ENCODE measurements at regions of chr5 and their contacts with region 1.

Region 1: DNA sequence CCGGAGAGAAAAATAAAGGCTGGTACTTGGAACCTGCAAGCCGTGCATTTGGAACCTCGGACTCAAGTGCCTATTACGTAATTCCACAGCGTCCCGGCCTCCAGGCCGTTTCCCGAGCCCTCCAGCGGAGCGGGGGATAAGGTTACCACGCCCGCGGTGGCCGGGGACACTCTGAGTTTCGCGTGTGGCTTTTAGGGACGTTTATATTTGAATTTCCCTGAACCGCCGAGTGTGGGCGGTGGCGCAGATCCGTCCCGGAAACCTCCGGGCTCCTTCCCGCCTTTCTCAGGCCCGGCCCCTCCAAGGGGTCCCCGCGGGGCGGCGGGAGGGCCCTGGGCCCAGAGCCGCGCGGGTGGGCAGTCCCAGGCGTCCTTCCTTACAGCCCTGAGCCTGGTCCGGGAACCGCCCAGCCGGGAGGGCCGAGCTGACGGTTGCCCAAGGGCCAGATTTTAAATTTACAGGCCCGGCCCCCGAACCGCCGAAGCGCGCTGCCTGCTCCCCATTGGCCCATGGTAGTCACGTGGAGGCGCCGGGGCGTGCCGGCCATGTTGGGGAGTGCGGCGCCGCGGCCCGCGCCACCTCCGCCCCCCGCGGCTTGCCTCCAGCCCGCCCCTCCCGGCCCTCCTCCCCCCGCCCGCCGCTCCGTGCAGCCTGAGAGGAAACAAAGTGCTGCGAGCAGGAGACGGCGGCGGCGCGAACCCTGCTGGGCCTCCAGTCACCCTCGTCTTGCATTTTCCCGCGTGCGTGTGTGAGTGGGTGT is at the start of gene LMNB1:
- DNase-seq: peak; percentile 96
- ATAC-seq: peak; percentile 70
- H3K4me3 ChIP-seq: peak within 1 kb of the TSS; percentile 81
- H3K27ac ChIP-seq: peak within 1 kb of the TSS; percentile 87
- H3K4me1 ChIP-seq: peaks cover 13% of the 10 kb centered on the region
- H3K27me3 ChIP-seq: no peaks in the 10 kb centered on the region
- CTCF ChIP-seq: no peak
- total RNA-seq, gene LMNB1: 119 and 151 TPM in 2 replicates

Region 2: DNA sequence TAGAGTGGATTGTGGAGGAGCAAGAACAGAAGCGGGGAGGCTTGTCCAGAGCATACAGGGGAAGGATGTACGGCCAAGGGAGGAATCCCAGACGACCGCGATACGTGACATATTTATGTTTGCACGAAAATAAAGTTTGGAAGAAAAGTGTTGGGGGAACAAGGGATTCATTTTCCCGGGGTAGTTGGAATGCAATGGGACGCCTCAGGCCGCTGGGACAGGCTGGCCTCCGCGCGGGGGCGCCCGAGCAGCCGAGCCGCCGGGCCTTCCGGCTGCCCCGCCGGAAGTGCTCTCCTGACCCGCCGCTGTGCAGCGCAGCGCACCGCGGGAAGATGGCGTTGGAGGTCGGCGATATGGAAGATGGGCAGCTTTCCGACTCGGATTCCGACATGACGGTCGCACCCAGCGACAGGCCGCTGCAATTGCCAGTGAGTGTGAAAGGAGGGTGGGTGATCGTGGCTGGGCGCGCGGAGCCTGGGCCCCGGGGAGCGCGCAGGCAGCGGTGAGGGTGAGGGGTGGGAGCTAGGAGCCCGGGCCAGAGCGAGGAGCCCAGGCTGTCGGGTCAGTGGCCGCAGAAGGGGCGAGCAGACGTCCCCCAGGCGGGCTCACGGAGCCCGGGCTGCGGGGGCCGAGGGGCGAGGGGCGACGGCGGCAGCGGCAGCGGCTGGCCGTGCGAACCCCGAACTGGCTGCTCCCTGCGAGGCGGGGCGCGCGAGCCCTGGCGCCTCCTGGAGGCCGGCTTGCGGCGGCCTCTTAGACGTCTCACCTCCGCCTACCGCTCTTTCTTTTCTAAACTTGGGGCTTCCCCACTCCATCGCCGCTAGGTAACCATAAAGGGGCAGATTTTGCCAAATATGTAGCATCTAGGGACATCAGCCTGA is 175.8 kb before region 1 on chr5 and contains the start of gene PHAX:
- CTCF ChIA-PET with region 1: no interaction called
- POLR2A ChIA-PET with region 1: no interaction called
- intact Hi-C with region 1: loop called (anchors 2 kb)
- DNase-seq: peak; percentile 76
- ATAC-seq: peak; percentile 88
- H3K4me3 ChIP-seq: peak within 1 kb of the TSS; percentile 99
- H3K27ac ChIP-seq: peak within 1 kb of the TSS; percentile 49
- H3K4me1 ChIP-seq: peaks cover 23% of the 10 kb centered on the region
- H3K27me3 ChIP-seq: no peaks in the 10 kb centered on the region
- CTCF ChIP-seq: peak; percentile 62
- total RNA-seq, gene PHAX: 34.4 and 40.3 TPM in 2 replicates

Region 3: DNA sequence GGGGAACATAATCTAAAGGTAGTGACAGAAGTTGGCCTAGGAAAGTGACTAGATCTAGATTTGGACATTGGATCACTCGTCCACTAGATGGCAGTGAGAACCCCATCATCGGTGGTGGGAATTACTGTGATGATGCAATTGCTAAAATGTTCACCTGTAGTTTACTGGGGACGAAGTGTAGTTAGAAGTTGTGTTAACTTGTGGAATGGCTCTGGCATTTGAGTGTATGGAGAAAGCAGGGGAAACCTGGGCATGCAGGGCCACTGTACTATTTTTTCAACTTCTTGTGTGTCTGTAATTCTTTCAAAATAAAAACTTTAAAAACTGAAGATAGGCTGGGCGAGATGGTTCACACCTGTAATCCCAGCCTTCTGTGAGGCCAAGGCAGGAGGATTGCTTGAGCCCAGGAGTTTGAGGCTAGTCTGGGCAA is 100.5 kb before region 1 on chr5:
- CTCF ChIA-PET with region 1: interaction called, 18 read pairs
- POLR2A ChIA-PET with region 1: no interaction called
- intact Hi-C with region 1: loop called (anchors 1 kb)
- DNase-seq: peak; percentile 78
- ATAC-seq: peak; percentile 50
- H3K4me3 ChIP-seq: no peak overlapping the region
- H3K27ac ChIP-seq: no peak overlapping the region
- H3K4me1 ChIP-seq: no peaks in the 10 kb centered on the region
- H3K27me3 ChIP-seq: no peaks in the 10 kb centered on the region
- CTCF ChIP-seq: peak; percentile 85

Region 4: DNA sequence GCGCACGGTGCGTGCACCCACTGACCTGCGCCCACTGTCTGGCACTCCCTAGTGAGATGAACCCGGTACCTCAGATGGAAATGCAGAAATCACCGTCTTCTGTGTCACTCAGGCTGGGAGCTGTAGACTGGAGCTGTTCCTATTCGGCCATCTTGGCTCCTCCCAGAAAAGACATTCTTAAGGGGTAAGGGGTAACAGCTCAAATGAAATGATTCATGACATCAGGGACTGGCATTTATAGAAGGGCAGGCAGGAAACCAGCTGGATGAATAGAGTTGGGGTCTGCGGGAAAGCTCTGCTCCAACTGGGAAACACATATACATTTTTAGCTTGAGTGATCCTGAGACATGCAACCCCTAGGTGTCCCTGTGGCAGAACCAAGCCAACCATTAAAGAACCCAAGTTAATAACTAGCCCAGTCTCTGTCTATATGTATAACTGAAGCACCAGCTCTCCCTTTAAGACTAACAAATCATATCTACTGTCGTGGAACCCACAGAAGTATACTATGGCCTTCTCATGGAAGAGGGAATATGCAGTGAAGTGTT is 119.6 kb after region 1 on chr5:
- CTCF ChIA-PET with region 1: no interaction called
- POLR2A ChIA-PET with region 1: no interaction called
- intact Hi-C with region 1: no loop called
- DNase-seq: no peak
- ATAC-seq: no peak
- H3K4me3 ChIP-seq: no peak overlapping the region
- H3K27ac ChIP-seq: no peak overlapping the region
- H3K4me1 ChIP-seq: no peaks in the 10 kb centered on the region
- H3K27me3 ChIP-seq: no peaks in the 10 kb centered on the region
- CTCF ChIP-seq: no peak

Region 5: GRCh38 chr5:126917918-126918614 is 141.4 kb after region 1 on chr5:
- CTCF ChIA-PET with region 1: no interaction called
- POLR2A ChIA-PET with region 1: interaction called, 20 read pairs
- intact Hi-C with region 1: no loop called
- DNase-seq: peak; percentile 87
- ATAC-seq: peak; percentile 92
- H3K4me3 ChIP-seq: no peak overlapping the region
- H3K27ac ChIP-seq: peak overlapping the region; percentile 67
- H3K4me1 ChIP-seq: peaks cover 26% of the 10 kb centered on the region
- H3K27me3 ChIP-seq: no peaks in the 10 kb centered on the region
- CTCF ChIP-seq: no peak

Measured in PC-3 (cell line).